ENCODE measurements at regions of chr1 and their contacts with region 1.

Region 1: GRCh38 chr1:244970661-244971551 is 106.6 kb upstream of the HNRNPU start:
- DNase-seq: peak; percentile 98
- ATAC-seq: peak; percentile 78
- H3K4me3 ChIP-seq: peak overlapping the region; percentile 79 to 98 (median 83)
- H3K4me3 Mint-ChIP-seq: peak overlapping the region; percentile 95
- H3K27ac ChIP-seq: peak overlapping the region; percentile 98 to 99
- H3K27ac Mint-ChIP-seq: peak overlapping the region; percentile 99
- H3K4me1 ChIP-seq: peaks cover 8 to 13% of the 10 kb centered on the region in 2 donors
- H3K4me1 Mint-ChIP-seq: peaks cover 17% of the 10 kb centered on the region
- H3K27me3 ChIP-seq: no peaks in the 10 kb centered on the region
- H3K27me3 Mint-ChIP-seq: no peaks in the 10 kb centered on the region
- CTCF ChIP-seq: peak; percentile 51

Region 2: DNA sequence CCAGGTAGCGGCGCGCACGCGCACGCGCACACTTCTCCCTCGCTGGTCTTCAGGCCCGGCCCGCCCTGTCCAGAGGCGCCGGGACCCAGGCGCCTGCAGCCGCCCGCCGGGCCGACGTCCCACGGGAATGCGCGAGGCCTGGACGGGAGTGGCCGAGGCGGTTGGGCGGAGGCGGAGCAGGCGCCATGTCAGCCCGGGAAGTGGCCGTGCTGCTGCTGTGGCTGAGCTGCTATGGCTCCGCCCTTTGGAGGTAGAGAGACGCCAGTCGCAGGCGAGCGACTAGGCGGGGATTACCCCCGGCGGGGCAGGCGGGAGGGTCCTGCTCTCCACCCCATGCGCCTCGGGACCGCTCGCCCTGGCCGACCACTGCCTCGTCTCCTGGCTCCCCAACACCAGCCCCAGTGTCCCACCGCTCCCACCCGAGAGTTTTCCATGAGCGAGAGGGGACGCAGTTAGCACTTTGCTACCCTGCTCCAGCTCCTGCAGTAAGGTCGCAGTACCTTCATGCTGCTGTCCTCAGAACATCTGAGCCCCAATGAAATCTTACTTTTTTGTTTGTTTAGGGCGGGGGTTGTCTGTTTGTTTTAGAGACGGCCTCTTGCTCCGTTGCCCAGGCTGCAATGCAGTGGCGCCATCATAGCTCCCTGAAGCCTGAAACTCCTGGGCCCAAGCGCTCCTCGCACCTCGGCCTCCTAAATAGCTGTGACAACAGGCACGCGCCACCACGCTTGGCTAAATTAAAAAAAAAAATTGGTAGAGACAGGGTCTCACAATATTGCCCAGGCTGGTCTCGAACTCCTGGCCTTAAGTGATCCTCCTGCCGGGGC is 509.4 kb before region 1 on chr1 and contains the start of gene CATSPERE:
- CTCF ChIA-PET with region 1: no interaction called
- POLR2A ChIA-PET with region 1: no interaction called
- intact Hi-C with region 1: loop called (anchors 1 kb)
- DNase-seq: peak; percentile 86
- ATAC-seq: peak; percentile 98
- H3K4me3 ChIP-seq: peak within 1 kb of the TSS; percentile 44 to 91 (median 81)
- H3K4me3 Mint-ChIP-seq: peak within 1 kb of the TSS; percentile 87
- H3K27ac ChIP-seq: peak within 1 kb of the TSS; percentile 38 to 77
- H3K27ac Mint-ChIP-seq: peak within 1 kb of the TSS; percentile 83
- H3K4me1 ChIP-seq: peaks cover 9 to 16% of the 10 kb centered on the region in 2 donors
- H3K4me1 Mint-ChIP-seq: peaks cover 12% of the 10 kb centered on the region
- H3K27me3 ChIP-seq: no peaks in the 10 kb centered on the region
- H3K27me3 Mint-ChIP-seq: no peaks in the 10 kb centered on the region
- CTCF ChIP-seq: no peak
- total RNA-seq, gene CATSPERE: 2.4 and 3.1 TPM in 2 replicates

Region 3: GRCh38 chr1:244801246-244801645 is 169.7 kb before region 1 on chr1:
- CTCF ChIA-PET with region 1: interaction called, 6 read pairs
- POLR2A ChIA-PET with region 1: no interaction called
- intact Hi-C with region 1: loop called (anchors 1 kb)
- DNase-seq: peak; percentile 80
- ATAC-seq: peak; percentile 94
- H3K4me3 ChIP-seq: no peak overlapping the region
- H3K4me3 Mint-ChIP-seq: peak overlapping the region; percentile 68
- H3K27ac ChIP-seq: no peak overlapping the region
- H3K27ac Mint-ChIP-seq: peak overlapping the region; percentile 38
- H3K4me1 ChIP-seq: peaks cover 6 to 8% of the 10 kb centered on the region in 2 donors
- H3K4me1 Mint-ChIP-seq: peaks cover 2% of the 10 kb centered on the region
- H3K27me3 ChIP-seq: no peaks in the 10 kb centered on the region
- H3K27me3 Mint-ChIP-seq: peaks cover 10% of the 10 kb centered on the region
- CTCF ChIP-seq: peak; percentile 81

Region 4: GRCh38 chr1:244835276-244836134 is 135.4 kb before region 1 on chr1 and contains the start of gene COX20:
- CTCF ChIA-PET with region 1: interaction called, 9 read pairs
- POLR2A ChIA-PET with region 1: interaction called, 92 read pairs
- intact Hi-C with region 1: loop called (anchors 1 kb)
- DNase-seq: peak; percentile 97
- ATAC-seq: peak; percentile 69
- H3K4me3 ChIP-seq: peak within 1 kb of the TSS; percentile 89 to 98 (median 94)
- H3K4me3 Mint-ChIP-seq: peak within 1 kb of the TSS; percentile 100
- H3K27ac ChIP-seq: peak within 1 kb of the TSS; percentile 97
- H3K27ac Mint-ChIP-seq: peak within 1 kb of the TSS; percentile 100
- H3K4me1 ChIP-seq: peaks cover 21 to 27% of the 10 kb centered on the region in 2 donors
- H3K4me1 Mint-ChIP-seq: peaks cover 59% of the 10 kb centered on the region
- H3K27me3 ChIP-seq: no peaks in the 10 kb centered on the region
- H3K27me3 Mint-ChIP-seq: no peaks in the 10 kb centered on the region
- CTCF ChIP-seq: peak; percentile 13
- total RNA-seq, gene COX20: 35.7 and 37.7 TPM in 2 replicates

Region 5: GRCh38 chr1:244945109-244945671 is 25.7 kb before region 1 on chr1:
- CTCF ChIA-PET with region 1: interaction called, 5 read pairs
- POLR2A ChIA-PET with region 1: interaction called, 16 read pairs
- intact Hi-C with region 1: loop called (anchors 1 kb)
- DNase-seq: peak; percentile 63
- ATAC-seq: peak; percentile 19
- H3K4me3 ChIP-seq: peak overlapping the region in 2 of 5 experiments; percentile 13 to 35
- H3K4me3 Mint-ChIP-seq: peak overlapping the region; percentile 71
- H3K27ac ChIP-seq: peak overlapping the region; percentile 61 to 63
- H3K27ac Mint-ChIP-seq: peak overlapping the region; percentile 87
- H3K4me1 ChIP-seq: peaks cover 18 to 31% of the 10 kb centered on the region in 2 donors
- H3K4me1 Mint-ChIP-seq: peaks cover 25% of the 10 kb centered on the region
- H3K27me3 ChIP-seq: no peaks in the 10 kb centered on the region
- H3K27me3 Mint-ChIP-seq: no peaks in the 10 kb centered on the region
- CTCF ChIP-seq: no peak

Region 6: DNA sequence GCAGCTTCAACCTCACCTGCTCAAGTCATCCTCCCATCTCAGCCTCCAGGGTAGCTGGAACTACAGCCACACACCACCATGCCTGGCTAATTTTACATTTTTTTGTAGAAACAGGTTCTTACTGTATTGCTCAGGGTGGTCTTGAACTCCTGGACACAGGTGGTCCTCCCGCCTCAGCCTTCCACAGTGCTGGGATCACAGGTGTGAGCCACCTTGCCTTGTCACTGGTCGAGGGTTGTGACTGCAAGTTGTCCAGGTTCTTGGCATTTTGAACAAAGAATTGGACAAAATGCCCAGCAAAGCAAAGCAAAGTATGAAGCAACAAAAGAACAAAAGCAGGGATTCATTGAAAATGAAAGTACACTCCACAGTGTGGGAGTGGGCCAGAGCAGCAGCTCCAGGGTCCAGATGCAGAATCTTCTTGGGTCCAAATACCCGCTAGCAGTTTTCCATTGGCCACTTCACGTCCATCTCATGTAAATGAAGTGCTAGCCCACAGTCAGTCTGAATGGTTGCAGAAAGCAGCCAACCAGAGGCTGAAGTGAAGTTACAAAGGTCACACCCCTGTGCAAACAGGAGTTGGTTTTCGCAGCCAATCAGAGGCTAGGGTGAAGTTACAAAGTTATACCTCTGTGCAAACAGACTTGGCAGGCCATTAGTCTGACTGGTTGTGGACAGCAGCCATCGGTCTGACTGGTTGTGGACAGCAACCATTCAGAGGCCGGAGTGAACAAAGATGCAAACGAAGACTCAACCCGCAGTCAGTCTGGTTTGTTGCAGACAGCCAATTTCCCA is 74.4 kb after region 1 on chr1:
- CTCF ChIA-PET with region 1: interaction called, 7 read pairs
- POLR2A ChIA-PET with region 1: no interaction called
- intact Hi-C with region 1: loop called (anchors 1 kb)
- DNase-seq: no peak
- ATAC-seq: no peak
- H3K4me3 ChIP-seq: no peak overlapping the region
- H3K4me3 Mint-ChIP-seq: no peak overlapping the region
- H3K27ac ChIP-seq: no peak overlapping the region
- H3K27ac Mint-ChIP-seq: no peak overlapping the region
- H3K4me1 ChIP-seq: no peaks in the 10 kb centered on the region
- H3K4me1 Mint-ChIP-seq: no peaks in the 10 kb centered on the region
- H3K27me3 ChIP-seq: no peaks in the 10 kb centered on the region
- H3K27me3 Mint-ChIP-seq: no peaks in the 10 kb centered on the region
- CTCF ChIP-seq: no peak

Measured in B cell (primary cell).